Posterior cingulate gyrus (tissue), 11 donors: ENCODE measurements at regions of chr1 and their contacts with region 1.

Region 1: GRCh38 chr1:44775078-44775929 is at the start of gene RPS8:
- DNase-seq: peak; percentile 86 to 98 (median 90)

Region 2: DNA sequence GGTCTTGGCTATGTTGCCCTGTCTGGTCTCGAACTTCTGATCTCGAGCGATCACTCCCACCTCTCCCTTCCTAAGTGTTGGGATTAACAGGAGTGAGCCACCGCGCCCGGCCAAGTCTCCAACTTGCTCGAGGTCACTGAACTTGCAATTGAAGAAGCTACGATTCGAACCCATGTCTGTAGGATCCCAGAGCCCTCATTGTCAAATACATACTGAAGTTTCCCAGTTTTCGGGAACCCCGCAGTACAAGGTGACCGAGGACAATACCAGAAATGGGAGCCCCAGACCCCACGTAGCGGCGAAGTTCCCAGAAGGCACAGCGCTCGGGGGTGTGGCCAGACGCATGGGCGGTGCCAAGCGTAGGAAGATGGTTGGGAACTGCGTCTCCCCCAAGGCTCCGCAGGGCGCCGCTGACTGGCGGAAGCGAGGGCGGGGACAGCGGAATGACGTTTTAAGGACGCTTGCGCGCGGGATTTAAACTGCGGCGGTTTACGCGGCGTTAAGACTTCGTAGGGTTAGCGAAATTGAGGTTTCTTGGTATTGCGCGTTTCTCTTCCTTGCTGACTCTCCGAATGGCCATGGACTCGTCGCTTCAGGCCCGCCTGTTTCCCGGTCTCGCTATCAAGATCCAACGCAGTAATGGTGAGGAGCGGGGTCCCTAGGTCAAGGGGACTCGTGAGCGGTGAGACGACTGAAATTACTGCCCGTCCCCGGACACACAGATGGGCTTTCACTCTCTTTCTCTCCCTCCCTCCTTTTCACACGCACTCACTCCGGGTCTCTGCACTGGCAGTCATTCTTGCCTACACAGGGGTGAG is 35.7 kb before region 1 on chr1 and contains the start of gene KIF2C:
- intact Hi-C with region 1: loop called (anchors 2 kb)
- DNase-seq: peak; percentile 93 to 99 (median 96)